ENCODE measurements at regions of chr18 and their contacts with region 1.

Region 1: GRCh38 chr18:3593904-3594661 is 144.1 kb downstream of the TGIF1 start:
- DNase-seq: peak; percentile 63

Region 2: DNA sequence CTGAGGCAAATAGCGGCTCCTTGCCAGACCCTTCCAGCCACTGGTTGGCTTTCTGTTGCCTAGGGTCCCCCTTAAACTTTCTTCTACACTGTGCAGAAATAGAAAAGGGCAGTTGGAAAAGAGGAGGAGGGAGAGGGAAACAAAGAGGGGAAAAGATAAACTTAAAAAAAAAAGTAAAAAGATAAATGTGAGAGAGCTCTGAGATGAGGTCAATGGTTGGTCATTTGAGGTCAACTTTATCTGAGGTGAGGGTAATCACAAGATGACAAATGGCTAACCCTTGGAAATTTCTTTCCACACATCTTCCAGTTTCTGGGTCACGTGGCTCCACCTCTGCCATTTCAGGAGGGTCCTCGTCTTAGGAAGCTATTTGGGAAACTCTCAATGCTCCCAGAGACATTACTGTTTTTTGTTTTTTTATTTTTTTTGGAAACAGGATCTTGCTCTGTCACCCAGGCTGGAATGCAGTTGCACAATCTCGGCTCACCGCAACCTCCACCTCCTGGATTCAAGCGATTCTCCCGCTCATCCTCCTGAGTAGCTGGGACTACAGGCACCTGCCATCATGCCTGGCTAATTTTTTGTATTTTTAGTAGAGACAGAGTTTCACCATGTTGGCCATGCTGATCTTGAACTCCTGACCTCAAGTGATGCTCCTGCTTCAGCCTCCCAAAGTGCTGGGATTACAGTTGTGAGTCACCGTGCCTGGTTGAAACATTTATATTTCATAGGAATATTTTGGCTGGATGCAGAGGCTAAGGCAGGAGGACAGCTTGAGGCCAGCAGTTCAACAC is 55.7 kb after region 1 on chr18:
- CTCF ChIA-PET with region 1: interaction called, 10 read pairs
- POLR2A ChIA-PET with region 1: no interaction called
- DNase-seq: no peak

Measured in HEK293T (cell line).